Activated B cell treated with CpG ODN at 0.5 μM for 24 hours (primary cell): ENCODE measurements at regions of chr3 and their contacts with region 1.

Region 1: GRCh38 chr3:189148081-189148507 is 23.7 kb upstream of the TPRG1 start:
- DNase-seq: peak; percentile 27
- ATAC-seq: peak; percentile 60
- H3K4me3 Mint-ChIP-seq: no peak overlapping the region
- H3K27ac Mint-ChIP-seq: no peak overlapping the region
- H3K4me1 Mint-ChIP-seq: no peaks in the 10 kb centered on the region
- H3K27me3 Mint-ChIP-seq: peaks cover 8% of the 10 kb centered on the region
- CTCF ChIP-seq: peak; percentile 56

Region 2: GRCh38 chr3:187227658-187228258 is 1920.3 kb before region 1 on chr3:
- CTCF ChIA-PET with region 1: no interaction called
- POLR2A ChIA-PET with region 1: no interaction called
- intact Hi-C with region 1: loop called (anchors 10 kb)
- DNase-seq: no peak
- ATAC-seq: no peak
- H3K4me3 Mint-ChIP-seq: no peak overlapping the region
- H3K27ac Mint-ChIP-seq: no peak overlapping the region
- H3K4me1 Mint-ChIP-seq: no peaks in the 10 kb centered on the region
- H3K27me3 Mint-ChIP-seq: peaks cover 30% of the 10 kb centered on the region
- CTCF ChIP-seq: no peak

Region 3: DNA sequence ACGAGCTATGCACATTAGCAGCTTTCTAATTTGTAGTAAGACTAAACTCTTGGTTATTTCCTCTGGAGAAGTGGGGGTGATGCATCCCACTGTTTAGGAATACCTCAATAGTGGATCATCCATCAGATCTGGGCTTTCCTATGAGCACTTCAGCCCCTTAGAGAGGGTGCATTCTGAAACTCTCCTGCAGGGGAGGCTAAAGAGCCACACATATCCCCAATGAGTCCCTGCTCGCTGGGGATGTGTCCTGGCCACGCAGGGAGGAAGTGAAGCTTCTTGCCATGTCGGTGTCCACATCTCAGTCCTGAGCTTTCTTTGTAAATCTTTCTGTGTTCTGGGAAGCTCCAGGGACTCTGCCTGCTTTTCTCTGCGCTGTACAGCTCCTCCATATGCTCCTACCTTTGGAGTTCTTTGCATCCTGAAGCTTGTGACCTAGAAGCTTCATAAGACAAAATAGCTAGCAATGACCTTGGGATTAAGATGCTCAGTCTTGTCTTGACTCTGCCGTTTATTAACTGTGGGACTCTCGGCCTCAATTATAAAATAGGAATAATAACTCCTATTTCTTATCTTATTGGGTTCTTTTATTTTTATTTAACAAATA is 1828.3 kb before region 1 on chr3:
- CTCF ChIA-PET with region 1: interaction called, 12 read pairs
- POLR2A ChIA-PET with region 1: no interaction called
- intact Hi-C with region 1: loop called (anchors 1 kb)
- DNase-seq: no peak
- ATAC-seq: peak; percentile 64
- H3K4me3 Mint-ChIP-seq: no peak overlapping the region
- H3K27ac Mint-ChIP-seq: no peak overlapping the region
- H3K4me1 Mint-ChIP-seq: peaks cover 6% of the 10 kb centered on the region
- H3K27me3 Mint-ChIP-seq: peaks cover 36% of the 10 kb centered on the region
- CTCF ChIP-seq: no peak

Region 4: GRCh38 chr3:187616307-187616972 is 1531.7 kb before region 1 on chr3:
- CTCF ChIA-PET with region 1: interaction called, 4 read pairs
- POLR2A ChIA-PET with region 1: no interaction called
- intact Hi-C with region 1: loop called (anchors 1 kb)
- DNase-seq: no peak
- ATAC-seq: peak; percentile 47
- H3K4me3 Mint-ChIP-seq: no peak overlapping the region
- H3K27ac Mint-ChIP-seq: no peak overlapping the region
- H3K4me1 Mint-ChIP-seq: no peaks in the 10 kb centered on the region
- H3K27me3 Mint-ChIP-seq: peaks cover 12% of the 10 kb centered on the region
- CTCF ChIP-seq: peak; percentile 26

Region 5: DNA sequence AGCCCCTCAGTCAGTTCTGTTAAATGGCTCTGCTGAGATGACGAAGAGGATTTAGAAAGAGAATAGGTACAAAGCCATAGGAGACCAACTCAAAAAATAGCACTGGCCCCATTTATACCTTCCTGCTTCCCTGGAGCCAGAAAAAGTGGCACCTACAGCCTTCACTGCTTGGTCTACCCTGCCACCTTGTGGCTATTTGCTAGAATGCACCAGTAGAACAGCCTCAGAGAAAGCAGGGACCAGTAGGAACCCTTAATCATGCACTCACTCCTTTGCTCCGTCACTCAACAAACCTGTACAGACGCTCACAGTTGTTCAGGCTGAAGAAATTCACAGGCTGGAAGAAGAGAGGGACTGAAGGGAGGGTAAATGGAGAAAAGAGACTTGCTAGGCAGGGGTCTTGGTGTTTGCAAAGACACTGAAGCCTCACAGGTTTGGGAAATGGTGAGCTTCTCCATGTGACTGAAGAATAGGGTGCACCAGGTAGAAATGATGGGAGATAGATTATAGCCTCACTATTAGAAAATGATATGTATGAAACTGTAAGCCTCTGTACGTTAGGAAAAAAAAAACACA is 1433.6 kb before region 1 on chr3:
- CTCF ChIA-PET with region 1: no interaction called
- POLR2A ChIA-PET with region 1: no interaction called
- intact Hi-C with region 1: loop called (anchors 1 kb)
- DNase-seq: peak; percentile 32
- ATAC-seq: peak; percentile 98
- H3K4me3 Mint-ChIP-seq: no peak overlapping the region
- H3K27ac Mint-ChIP-seq: no peak overlapping the region
- H3K4me1 Mint-ChIP-seq: no peaks in the 10 kb centered on the region
- H3K27me3 Mint-ChIP-seq: no peaks in the 10 kb centered on the region
- CTCF ChIP-seq: no peak

Region 6: DNA sequence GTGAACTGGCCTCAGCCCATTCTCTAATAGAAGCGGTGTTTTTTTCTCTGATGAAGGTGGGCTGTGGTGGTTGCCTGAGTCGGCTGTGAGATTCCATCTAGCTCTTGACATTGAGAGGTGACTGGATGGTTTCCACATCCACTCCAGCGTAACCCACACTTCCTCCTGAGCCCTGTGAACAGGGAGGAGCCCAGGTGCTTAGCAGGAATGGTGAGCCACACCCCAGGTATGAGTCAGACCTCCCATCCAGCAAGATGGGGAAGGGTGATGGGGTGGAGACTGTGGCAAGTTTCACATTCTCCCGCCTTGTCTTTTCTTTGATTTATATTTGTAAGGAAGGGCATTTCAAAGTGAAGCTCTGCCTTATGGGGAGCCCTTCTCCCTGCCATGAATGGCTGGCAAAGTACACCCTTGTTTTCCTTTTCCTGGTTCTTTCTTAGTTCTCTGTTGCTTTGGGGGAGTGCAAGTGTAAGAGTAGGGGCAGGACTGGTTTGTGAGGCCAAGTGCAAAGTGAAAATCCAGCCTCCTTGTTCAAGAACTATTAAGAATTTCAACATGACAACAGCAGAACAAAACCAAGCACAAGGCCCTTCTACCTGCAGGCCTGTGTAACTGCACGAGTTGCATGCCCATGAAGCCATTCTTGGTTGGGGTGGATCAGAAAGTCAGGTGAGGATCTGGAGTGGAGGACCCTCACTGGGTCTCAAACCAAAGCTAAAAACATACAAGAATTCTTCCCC is 19.1 kb after region 1 on chr3:
- CTCF ChIA-PET with region 1: no interaction called
- POLR2A ChIA-PET with region 1: no interaction called
- intact Hi-C with region 1: no loop called
- DNase-seq: no peak
- ATAC-seq: no peak
- H3K4me3 Mint-ChIP-seq: no peak overlapping the region
- H3K27ac Mint-ChIP-seq: no peak overlapping the region
- H3K4me1 Mint-ChIP-seq: no peaks in the 10 kb centered on the region
- H3K27me3 Mint-ChIP-seq: peaks cover 2% of the 10 kb centered on the region
- CTCF ChIP-seq: no peak

Region 7: GRCh38 chr3:190288836-190289235 is 1140.7 kb after region 1 on chr3:
- CTCF ChIA-PET with region 1: no interaction called
- POLR2A ChIA-PET with region 1: no interaction called
- intact Hi-C with region 1: no loop called
- DNase-seq: no peak
- ATAC-seq: no peak
- H3K4me3 Mint-ChIP-seq: no peak overlapping the region
- H3K27ac Mint-ChIP-seq: no peak overlapping the region
- H3K4me1 Mint-ChIP-seq: no peaks in the 10 kb centered on the region
- H3K27me3 Mint-ChIP-seq: no peaks in the 10 kb centered on the region
- CTCF ChIP-seq: no peak